GM12878 (cell line): ENCODE measurements at regions of chr4 and their contacts with region 1.

Region 1: DNA sequence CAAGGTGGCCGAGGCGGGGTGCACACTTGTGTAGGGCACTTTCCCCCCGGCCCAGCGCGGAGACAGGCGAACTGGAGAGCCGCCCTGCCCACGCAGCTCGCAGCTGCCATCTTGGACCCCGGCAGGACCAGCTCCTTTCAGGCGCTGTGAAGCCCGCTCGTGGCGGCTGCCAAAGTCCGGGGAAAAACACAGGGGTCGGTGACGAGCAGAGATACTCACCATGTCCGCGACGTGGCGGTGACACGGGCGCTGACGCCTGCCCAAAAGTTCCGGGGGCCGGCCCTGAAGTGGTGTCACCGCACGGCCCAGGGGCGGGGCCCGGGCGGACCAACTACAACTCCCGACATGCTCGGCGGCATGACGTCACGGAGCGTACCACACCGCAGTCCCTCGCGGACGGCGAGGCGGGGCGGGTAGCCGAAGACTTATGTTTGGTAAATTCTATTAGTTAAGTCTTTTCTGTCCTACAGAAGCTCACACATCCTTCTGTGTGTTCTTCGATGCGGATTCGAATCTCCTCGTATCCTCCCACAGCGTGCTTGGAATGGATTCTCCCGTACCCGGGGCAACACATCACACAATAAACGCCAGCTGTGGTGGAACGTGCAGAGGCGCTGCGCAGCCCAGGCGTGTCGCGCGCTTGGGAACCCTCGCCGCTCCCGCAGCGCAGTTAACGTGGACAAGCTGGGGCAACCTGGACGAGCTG is at the start of gene UFSP2:
- DNase-seq: peak; percentile 84
- ATAC-seq: peak; percentile 91
- H3K4me3 ChIP-seq: peak within 1 kb of the TSS; percentile 83
- H3K27ac ChIP-seq: peak within 1 kb of the TSS; percentile 92
- H3K4me1 ChIP-seq: no peaks in the 10 kb centered on the region
- H3K27me3 ChIP-seq: no peaks in the 10 kb centered on the region
- CTCF ChIP-seq: no peak
- EP300 ChIP-seq: peak in 1 of 2 experiments; percentile 50; a peak in 1 of 4 replicates
- POLR2A ChIP-seq: peak; percentile 75
- RAD21 ChIP-seq: 0 out of 2 replicates have a peak, but pooled peaks have one; percentile 4
- polyA plus RNA-seq, gene UFSP2: 40.9 to 42.5 TPM

Region 2: GRCh38 chr4:184462724-184463123 is 963.1 kb before region 1 on chr4:
- CTCF ChIA-PET with region 1: no interaction called
- POLR2A ChIA-PET with region 1: no interaction called
- RAD21 ChIA-PET with region 1: no interaction called
- SMC1A ChIA-PET with region 1: no interaction called
- in situ Hi-C with region 1: no loop called
- intact Hi-C with region 1: no loop called
- DNase-seq: no peak
- ATAC-seq: no peak
- H3K4me3 ChIP-seq: no peak overlapping the region
- H3K27ac ChIP-seq: no peak overlapping the region
- H3K4me1 ChIP-seq: peaks cover 27% of the 10 kb centered on the region
- H3K27me3 ChIP-seq: no peaks in the 10 kb centered on the region
- CTCF ChIP-seq: no peak
- EP300 ChIP-seq: no peak
- POLR2A ChIP-seq: no peak
- RAD21 ChIP-seq: no peak

Region 3: GRCh38 chr4:185405296-185405999 is 20.4 kb before region 1 on chr4:
- CTCF ChIA-PET with region 1: interaction called, 4 read pairs
- POLR2A ChIA-PET with region 1: interaction called, 10 read pairs
- RAD21 ChIA-PET with region 1: interaction called, 21 read pairs
- SMC1A ChIA-PET with region 1: interaction called, 11 read pairs
- in situ Hi-C with region 1: no loop called
- intact Hi-C with region 1: no loop called
- DNase-seq: no peak
- ATAC-seq: peak; percentile 88
- H3K4me3 ChIP-seq: no peak overlapping the region
- H3K27ac ChIP-seq: peak overlapping the region; percentile 69
- H3K4me1 ChIP-seq: peaks cover 6% of the 10 kb centered on the region; the same call in 1 of the 2 replicates
- H3K27me3 ChIP-seq: no peaks in the 10 kb centered on the region
- CTCF ChIP-seq: no peak
- EP300 ChIP-seq: no peak
- POLR2A ChIP-seq: no peak
- RAD21 ChIP-seq: no peak

Region 4: DNA sequence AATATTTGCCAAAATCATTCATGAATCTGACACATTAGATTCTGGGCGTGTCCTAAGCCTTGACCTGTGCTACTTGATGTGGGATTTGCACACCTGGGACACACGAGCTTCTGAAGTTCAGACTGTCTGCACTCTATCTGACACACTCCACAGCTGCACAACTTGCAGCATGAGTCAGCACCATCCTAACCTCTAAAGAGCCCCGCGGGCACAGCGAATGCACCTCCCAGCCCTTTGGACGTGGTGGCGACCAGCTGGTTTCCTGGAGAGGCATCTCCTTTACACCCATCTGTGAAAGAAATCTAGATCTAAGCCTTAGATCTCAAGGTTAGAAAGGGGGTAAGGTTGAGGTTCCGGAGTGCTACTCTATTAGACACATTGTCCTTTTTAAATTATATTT is 317.0 kb after region 1 on chr4:
- CTCF ChIA-PET with region 1: no interaction called
- POLR2A ChIA-PET with region 1: no interaction called
- RAD21 ChIA-PET with region 1: no interaction called
- SMC1A ChIA-PET with region 1: no interaction called
- in situ Hi-C with region 1: no loop called
- intact Hi-C with region 1: no loop called
- DNase-seq: no peak
- ATAC-seq: peak; percentile 77
- H3K4me3 ChIP-seq: no peak overlapping the region
- H3K27ac ChIP-seq: no peak overlapping the region
- H3K4me1 ChIP-seq: peaks cover 17% of the 10 kb centered on the region
- H3K27me3 ChIP-seq: no peaks in the 10 kb centered on the region
- CTCF ChIP-seq: no peak
- EP300 ChIP-seq: no peak
- POLR2A ChIP-seq: no peak
- RAD21 ChIP-seq: no peak

Region 5: GRCh38 chr4:186326391-186326790 is 900.6 kb after region 1 on chr4:
- CTCF ChIA-PET with region 1: no interaction called
- POLR2A ChIA-PET with region 1: no interaction called
- RAD21 ChIA-PET with region 1: no interaction called
- SMC1A ChIA-PET with region 1: no interaction called
- in situ Hi-C with region 1: no loop called
- intact Hi-C with region 1: no loop called
- DNase-seq: no peak
- ATAC-seq: no peak
- H3K4me3 ChIP-seq: no peak overlapping the region
- H3K27ac ChIP-seq: no peak overlapping the region
- H3K4me1 ChIP-seq: no peaks in the 10 kb centered on the region
- H3K27me3 ChIP-seq: no peaks in the 10 kb centered on the region
- CTCF ChIP-seq: no peak
- EP300 ChIP-seq: no peak
- POLR2A ChIP-seq: no peak
- RAD21 ChIP-seq: no peak